ENCODE measurements at regions of chr4 and their contacts with region 1.

Region 1: DNA sequence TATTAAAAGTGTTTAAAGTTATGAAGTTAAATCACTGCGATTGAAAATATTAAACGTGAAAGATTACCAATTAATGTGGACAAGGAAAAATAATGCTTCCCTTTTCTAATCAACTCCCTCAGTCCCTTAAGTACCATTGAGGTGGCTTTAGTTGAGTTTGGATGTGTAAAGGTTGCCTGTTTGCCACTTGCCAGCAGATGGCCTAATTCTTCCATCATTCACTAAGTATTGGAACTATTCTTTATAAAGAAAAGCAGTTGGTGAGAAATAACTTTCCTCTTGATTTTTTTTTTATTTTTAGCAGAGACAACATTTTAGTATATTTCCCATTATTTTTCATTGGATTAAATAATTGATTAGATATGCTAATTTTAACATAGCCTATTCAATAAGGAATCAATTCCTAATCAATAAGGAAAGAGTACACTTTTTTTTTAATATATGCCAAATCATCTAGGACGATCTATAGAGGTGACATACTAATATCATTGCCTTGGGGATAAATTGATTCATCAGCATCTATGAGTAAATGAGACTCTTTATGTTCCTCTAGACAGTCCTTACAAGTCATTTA is 296.0 kb upstream of the TACR3 start:
- DNase-seq: peak; percentile 29

Region 2: GRCh38 chr4:104138116-104138515 is 122.3 kb after region 1 on chr4:
- in situ Hi-C with region 1: no loop called
- DNase-seq: no peak

Region 3: DNA sequence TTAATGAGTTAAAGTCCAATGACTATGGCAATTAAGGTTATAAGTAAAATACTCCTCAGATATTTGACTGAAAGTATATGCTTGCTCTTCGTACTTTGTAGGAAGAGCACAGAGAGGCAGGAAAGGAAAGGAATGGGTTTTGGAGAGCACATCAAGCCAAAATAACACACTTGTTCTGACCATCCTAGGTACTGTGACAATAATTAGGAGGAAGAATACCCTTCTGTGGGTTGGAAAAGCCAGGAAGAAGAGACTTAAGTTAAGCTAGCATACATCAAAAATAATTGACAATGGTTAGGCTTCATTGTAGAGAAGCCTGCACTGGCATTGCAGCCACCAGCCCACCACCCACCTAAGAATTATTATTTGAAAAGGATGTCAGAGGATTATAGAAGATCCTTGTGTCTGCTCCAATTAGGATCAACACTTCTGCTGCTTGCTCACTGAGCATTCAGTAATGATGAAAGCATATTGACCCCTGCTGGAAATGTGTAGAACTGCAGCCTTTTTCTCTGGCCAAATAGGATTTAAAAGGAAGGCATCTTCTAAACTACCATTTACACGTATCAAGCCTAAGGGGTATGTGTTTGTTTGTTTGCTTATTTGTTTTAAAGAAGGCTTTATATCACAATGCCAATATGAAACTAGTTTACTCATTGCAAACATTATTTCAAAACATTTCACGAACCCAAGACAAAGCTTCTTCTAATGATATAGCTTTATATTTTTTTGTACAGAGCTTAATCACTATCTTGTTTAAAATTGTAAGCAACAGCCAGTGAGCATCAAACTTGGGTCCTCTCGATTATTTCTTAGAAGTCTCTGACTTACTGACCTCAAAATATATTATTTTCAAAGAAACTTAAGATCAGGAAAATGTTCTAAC is 844.7 kb after region 1 on chr4:
- in situ Hi-C with region 1: loop called (anchors 25 kb)
- DNase-seq: peak; percentile 75

Measured in G401 (cell line).